Activated B cell treated with CpG ODN at 0.5 μM for 24 hours (primary cell): ENCODE measurements at regions of chr1 and their contacts with region 1.

Region 1: DNA sequence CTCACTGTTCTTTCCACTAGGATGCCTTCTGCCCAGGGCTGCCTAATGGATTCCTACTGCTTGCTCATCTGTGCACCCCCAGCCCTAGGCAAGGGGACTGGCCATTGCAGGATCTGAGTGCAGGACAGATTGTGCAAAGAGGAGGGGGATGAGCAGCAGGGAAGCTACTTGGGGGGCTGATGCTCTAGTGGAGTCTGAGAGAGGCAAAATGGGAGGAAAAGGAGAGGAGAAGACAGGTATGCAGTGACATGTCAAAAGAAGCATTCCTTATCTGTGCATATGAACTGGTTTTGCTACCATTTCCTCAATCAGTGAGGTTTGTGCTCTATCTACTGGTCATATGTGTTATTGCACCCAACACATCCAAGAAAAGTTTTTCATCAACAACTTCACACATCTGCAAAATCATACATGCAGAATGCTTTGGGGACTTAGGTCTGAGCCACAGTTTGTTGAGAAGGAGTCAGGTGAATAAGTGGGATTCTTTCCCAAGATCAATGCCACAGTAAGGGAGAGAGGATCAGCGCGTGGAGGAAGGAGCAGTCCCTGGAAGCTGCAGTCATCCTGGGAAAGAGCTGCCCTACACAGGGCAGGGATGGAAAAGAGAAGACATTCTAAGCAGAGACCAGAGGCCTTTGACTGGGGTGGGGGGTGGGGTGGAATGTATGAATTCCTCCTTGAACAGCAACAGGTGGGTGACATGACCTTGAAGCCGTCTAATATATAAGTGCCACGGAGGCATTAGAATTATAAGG is 14.4 kb downstream of the SLC5A9 start:
- DNase-seq: no peak
- ATAC-seq: no peak
- H3K4me3 Mint-ChIP-seq: no peak overlapping the region
- H3K27ac Mint-ChIP-seq: no peak overlapping the region
- H3K4me1 Mint-ChIP-seq: peaks cover 15% of the 10 kb centered on the region
- H3K27me3 Mint-ChIP-seq: no peaks in the 10 kb centered on the region
- CTCF ChIP-seq: no peak

Region 2: GRCh38 chr1:47997289-47998200 is 239.3 kb before region 1 on chr1 and contains the start of gene TRABD2B:
- CTCF ChIA-PET with region 1: no interaction called
- POLR2A ChIA-PET with region 1: no interaction called
- intact Hi-C with region 1: loop called (anchors 2 kb)
- DNase-seq: peak; percentile 65
- ATAC-seq: peak; percentile 60
- H3K4me3 Mint-ChIP-seq: peak within 1 kb of the TSS; percentile 70
- H3K27ac Mint-ChIP-seq: no peak within 1 kb of the TSS
- H3K4me1 Mint-ChIP-seq: peaks cover 10% of the 10 kb centered on the region
- H3K27me3 Mint-ChIP-seq: peaks cover 48% of the 10 kb centered on the region
- CTCF ChIP-seq: peak; percentile 64
- total RNA-seq, gene TRABD2B: not detected in 2 replicates

Region 3: DNA sequence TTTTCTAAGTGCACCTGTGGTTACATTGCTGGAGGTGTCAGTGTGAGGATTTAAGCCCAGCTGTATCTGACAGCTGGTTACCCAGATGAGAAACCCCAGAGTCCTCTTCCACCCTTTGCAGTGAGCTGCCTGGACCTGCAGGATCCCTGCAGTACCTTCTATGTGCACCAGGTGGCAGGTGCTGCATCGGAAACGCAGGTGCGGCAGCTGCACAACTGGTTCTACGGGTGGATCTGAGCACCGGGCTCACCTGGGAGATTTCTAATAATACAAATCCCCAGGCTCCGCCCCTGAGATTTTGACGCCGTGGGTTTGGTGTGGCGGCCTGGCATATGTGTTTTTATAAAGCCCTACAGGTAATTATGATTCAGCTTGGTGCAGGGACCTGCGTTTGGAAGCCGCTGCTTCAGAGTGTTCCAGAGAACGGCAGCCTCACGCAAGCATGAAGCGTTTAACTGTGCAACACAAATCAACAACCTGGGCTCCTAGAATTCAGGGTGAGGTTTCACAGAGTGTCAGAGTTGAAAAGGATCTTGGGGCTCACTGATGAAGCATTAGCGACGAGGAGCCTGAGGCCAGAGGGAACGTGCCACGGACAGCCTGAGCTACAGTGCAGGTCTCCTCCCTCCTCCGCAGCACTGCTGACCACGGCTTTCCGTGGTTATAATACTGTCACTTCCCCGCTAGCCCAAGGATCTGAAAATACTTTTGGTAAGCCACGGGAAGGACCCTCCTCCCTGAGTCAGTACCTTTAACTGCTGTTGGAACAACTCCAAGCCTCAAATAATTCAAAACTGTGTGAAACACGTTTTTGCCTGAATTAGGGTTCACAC is 143.0 kb before region 1 on chr1:
- CTCF ChIA-PET with region 1: interaction called, 16 read pairs
- POLR2A ChIA-PET with region 1: no interaction called
- intact Hi-C with region 1: no loop called
- DNase-seq: peak; percentile 50
- ATAC-seq: peak; percentile 75
- H3K4me3 Mint-ChIP-seq: peak overlapping the region; percentile 45
- H3K27ac Mint-ChIP-seq: no peak overlapping the region
- H3K4me1 Mint-ChIP-seq: peaks cover 6% of the 10 kb centered on the region
- H3K27me3 Mint-ChIP-seq: peaks cover 42% of the 10 kb centered on the region
- CTCF ChIP-seq: peak; percentile 70

Region 4: GRCh38 chr1:48164571-48164970 is 72.3 kb before region 1 on chr1:
- CTCF ChIA-PET with region 1: no interaction called
- POLR2A ChIA-PET with region 1: no interaction called
- intact Hi-C with region 1: no loop called
- DNase-seq: no peak
- ATAC-seq: no peak
- H3K4me3 Mint-ChIP-seq: no peak overlapping the region
- H3K27ac Mint-ChIP-seq: no peak overlapping the region
- H3K4me1 Mint-ChIP-seq: no peaks in the 10 kb centered on the region
- H3K27me3 Mint-ChIP-seq: no peaks in the 10 kb centered on the region
- CTCF ChIP-seq: no peak

Region 5: GRCh38 chr1:48249868-48250267 is 13.0 kb after region 1 on chr1:
- CTCF ChIA-PET with region 1: no interaction called
- POLR2A ChIA-PET with region 1: no interaction called
- intact Hi-C with region 1: no loop called
- DNase-seq: no peak
- ATAC-seq: no peak
- H3K4me3 Mint-ChIP-seq: no peak overlapping the region
- H3K27ac Mint-ChIP-seq: no peak overlapping the region
- H3K4me1 Mint-ChIP-seq: peaks cover 27% of the 10 kb centered on the region
- H3K27me3 Mint-ChIP-seq: no peaks in the 10 kb centered on the region
- CTCF ChIP-seq: no peak

Region 6: DNA sequence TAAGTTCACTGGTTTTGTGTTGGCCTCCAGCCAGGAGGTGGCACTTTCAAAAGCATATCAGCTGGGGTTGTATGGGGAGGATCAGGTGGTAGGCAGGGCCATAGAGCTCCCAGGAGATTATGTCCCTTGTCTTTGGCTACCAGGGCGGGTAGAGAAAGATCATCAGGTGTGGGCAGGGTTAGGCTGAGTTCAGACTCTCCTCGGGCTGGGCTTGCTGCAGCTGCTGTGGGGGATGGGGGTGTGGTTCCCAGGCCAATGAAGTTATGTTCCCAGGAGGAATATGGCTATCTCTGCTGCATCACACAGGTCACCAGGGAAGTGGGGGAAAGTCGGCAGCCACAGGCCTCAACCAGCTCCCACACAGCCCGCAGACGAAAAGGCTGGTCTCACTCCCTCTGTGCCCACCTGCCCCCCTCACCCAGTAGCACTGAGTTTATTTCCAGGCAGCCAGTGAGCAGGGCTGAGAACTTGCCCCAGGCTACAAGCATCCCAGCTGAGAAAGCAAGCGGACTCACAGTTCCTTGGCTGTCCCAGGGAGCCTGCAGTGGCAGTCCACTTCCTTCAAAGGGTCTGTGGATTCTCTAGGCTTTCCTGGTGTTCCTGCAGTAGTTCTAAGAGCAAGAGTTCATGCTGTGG is 54.4 kb after region 1 on chr1:
- CTCF ChIA-PET with region 1: no interaction called
- POLR2A ChIA-PET with region 1: no interaction called
- intact Hi-C with region 1: no loop called
- DNase-seq: no peak
- ATAC-seq: no peak
- H3K4me3 Mint-ChIP-seq: no peak overlapping the region
- H3K27ac Mint-ChIP-seq: no peak overlapping the region
- H3K4me1 Mint-ChIP-seq: no peaks in the 10 kb centered on the region
- H3K27me3 Mint-ChIP-seq: no peaks in the 10 kb centered on the region
- CTCF ChIP-seq: no peak